A549 (cell line): ENCODE measurements at regions of chr13 and their contacts with region 1.

Region 1: DNA sequence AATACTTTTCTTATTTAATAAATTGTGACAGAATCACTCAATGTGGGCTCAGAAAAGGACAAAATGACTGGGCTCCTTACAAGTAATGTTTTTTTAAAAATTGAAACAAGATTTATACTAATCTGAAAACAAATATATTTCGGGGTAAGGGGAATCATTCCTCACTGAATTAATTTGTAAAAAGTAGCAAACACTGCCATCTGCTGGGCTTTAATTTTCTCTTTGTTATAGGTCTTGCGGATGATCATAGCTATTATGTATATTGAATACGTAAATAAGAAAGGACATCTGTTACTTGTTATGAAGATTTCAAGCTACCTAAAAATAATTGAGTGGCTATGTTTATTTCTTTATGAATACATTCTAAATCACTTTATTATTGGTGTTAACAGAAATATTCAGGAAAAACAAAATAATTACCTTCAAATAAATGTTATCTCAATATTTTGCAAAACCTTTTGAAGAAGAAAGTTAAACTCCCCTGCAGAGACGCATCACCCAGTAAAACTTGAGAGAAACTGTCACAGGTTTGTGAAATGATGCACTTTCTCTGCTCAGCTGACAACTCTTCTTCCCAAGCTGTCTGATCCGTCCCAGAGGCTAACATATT is 17.8 kb upstream of the ENOX1 start:
- DNase-seq: peak; percentile 9 to 51
- ATAC-seq: peak; percentile 65 to 77
- H3K4me3 ChIP-seq: peak overlapping the region; percentile 24; the same call in 1 of the 3 replicates
- H3K27ac ChIP-seq: peak overlapping the region; percentile 68 to 81; a peak in 5 of 6 replicates
- H3K4me1 ChIP-seq: peaks cover 8% of the 10 kb centered on the region; the same call in 2 of the 3 replicates
- CTCF ChIP-seq: peak; percentile 57
- EP300 ChIP-seq: no peak
- POLR2A ChIP-seq: no peak
- RAD21 ChIP-seq: peak; percentile 63 to 66

Region 2: GRCh38 chr13:43786773-43787517 is 17.6 kb before region 1 on chr13 and contains the start of gene ENOX1:
- CTCF ChIA-PET with region 1: interaction called, 21 read pairs
- POLR2A ChIA-PET with region 1: no interaction called
- DNase-seq: peak; percentile 13 to 54
- ATAC-seq: peak; percentile 74 to 84
- H3K4me3 ChIP-seq: peak within 1 kb of the TSS; percentile 60
- H3K27ac ChIP-seq: peak within 1 kb of the TSS; percentile 63 to 89; a peak in 5 of 6 replicates
- H3K4me1 ChIP-seq: peaks cover 9% of the 10 kb centered on the region
- CTCF ChIP-seq: peak; percentile 11; the same call in 2 of the 3 replicates
- EP300 ChIP-seq: no peak
- POLR2A ChIP-seq: no peak
- RAD21 ChIP-seq: peak in 1 of 2 experiments; percentile 15; a peak in 1 of 5 replicates
- polyA plus RNA-seq, gene ENOX1: 0.41 and 0.46 TPM in 2 replicates

Region 3: DNA sequence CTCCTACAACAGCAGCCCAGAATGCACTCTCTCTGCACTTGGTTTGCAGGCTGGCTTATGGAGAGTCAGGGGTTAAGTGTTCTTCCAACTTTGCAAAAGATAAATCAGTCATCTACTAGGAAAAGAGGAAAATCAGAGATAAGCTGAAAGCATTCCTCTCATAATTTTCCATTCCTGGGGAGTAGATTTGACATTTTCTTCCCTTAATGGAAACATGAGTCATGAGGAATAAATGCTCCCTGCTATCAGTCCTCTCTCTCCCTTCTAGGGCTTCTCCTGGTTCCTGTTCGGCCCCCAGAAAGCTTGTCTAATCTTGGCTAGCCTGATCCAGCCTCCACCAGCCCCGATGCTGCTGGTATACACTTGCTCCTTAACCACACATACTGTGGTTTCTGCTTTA is 10.6 kb after region 1 on chr13:
- CTCF ChIA-PET with region 1: interaction called, 11 read pairs
- POLR2A ChIA-PET with region 1: interaction called, 3 read pairs
- DNase-seq: peak in 1 of 2 experiments; percentile 28
- ATAC-seq: peak in 1 of 2 experiments; percentile 84; a peak in 3 of 6 replicates
- H3K4me3 ChIP-seq: no peak overlapping the region
- H3K27ac ChIP-seq: peak overlapping the region; percentile 36 to 81; a peak in 5 of 6 replicates
- H3K4me1 ChIP-seq: peaks cover 13% of the 10 kb centered on the region
- CTCF ChIP-seq: no peak
- EP300 ChIP-seq: no peak
- POLR2A ChIP-seq: no peak
- RAD21 ChIP-seq: no peak

Region 4: GRCh38 chr13:43878892-43879754 is 74.6 kb after region 1 on chr13 and contains the start of gene CCDC122:
- CTCF ChIA-PET with region 1: interaction called, 3 read pairs
- POLR2A ChIA-PET with region 1: interaction called, 11 read pairs
- DNase-seq: peak; percentile 66 to 75
- ATAC-seq: peak; percentile 96 to 97
- H3K4me3 ChIP-seq: peak within 1 kb of the TSS; percentile 80
- H3K27ac ChIP-seq: peak within 1 kb of the TSS; percentile 95 to 96
- H3K4me1 ChIP-seq: peaks cover 11% of the 10 kb centered on the region; the same call in 2 of the 3 replicates
- CTCF ChIP-seq: no peak
- EP300 ChIP-seq: no peak
- POLR2A ChIP-seq: peak; percentile 52
- RAD21 ChIP-seq: no peak
- polyA plus RNA-seq, gene CCDC122: 2.6 and 2.7 TPM in 2 replicates

Region 5: DNA sequence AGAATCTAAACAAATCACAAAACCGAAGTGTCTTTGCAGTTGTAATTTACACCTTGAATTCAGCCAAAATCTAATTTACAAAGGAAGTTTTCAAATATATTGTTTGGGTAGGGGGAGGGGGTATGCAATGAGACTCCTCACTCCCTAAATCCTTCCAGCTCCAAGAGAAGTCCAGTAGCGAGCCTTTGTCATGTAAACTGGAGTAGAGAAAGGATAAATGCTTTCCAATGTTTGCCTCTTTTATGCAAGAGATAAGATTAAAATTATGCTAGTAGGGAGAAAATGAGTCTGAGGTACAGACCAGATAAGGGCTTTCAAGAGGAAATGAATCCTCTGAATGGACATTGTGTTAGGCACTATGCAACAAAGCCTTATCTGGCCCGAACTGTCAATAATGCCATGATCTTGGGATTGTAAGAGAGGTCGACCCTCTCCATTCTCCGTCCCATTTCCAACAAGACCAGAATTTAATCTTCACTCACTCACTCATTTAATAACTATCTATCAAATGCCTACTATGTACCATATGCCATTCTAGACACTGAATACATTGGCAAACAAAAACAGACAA is 274.3 kb after region 1 on chr13:
- CTCF ChIA-PET with region 1: no interaction called
- POLR2A ChIA-PET with region 1: no interaction called
- DNase-seq: no peak
- ATAC-seq: no peak
- H3K4me3 ChIP-seq: no peak overlapping the region
- H3K27ac ChIP-seq: no peak overlapping the region
- H3K4me1 ChIP-seq: no peaks in the 10 kb centered on the region
- CTCF ChIP-seq: no peak
- EP300 ChIP-seq: no peak
- POLR2A ChIP-seq: no peak
- RAD21 ChIP-seq: no peak